Panc1 (cell line): ENCODE measurements at regions of chr2 and their contacts with region 1.

Region 1: DNA sequence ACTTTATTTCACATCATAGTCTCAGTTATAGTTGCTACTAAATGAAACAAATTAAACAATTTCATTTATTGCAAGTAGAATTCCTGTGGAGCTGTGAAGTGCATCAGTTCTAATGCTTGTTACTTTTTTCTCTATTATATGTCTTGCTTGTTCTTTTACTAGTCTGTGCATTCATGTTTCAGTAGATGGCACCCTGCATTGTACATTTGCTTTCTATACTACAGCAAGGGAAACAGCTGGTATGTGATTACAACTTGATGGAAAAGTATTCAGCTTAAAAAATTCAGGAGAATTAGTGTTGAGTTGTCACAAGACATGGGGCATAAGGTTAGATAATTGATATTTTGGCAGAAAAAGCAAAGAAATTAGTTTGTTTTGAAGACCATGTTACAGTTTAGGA is 72.3 kb downstream of the TANK start:
- DNase-seq: no peak
- ATAC-seq: no peak
- H3K4me3 ChIP-seq: no peak overlapping the region
- H3K27ac ChIP-seq: no peak overlapping the region
- H3K4me1 ChIP-seq: peaks cover 7% of the 10 kb centered on the region
- H3K27me3 ChIP-seq: no peaks in the 10 kb centered on the region
- CTCF ChIP-seq: peak; percentile 15; the same call in 1 of the 2 replicates

Region 2: DNA sequence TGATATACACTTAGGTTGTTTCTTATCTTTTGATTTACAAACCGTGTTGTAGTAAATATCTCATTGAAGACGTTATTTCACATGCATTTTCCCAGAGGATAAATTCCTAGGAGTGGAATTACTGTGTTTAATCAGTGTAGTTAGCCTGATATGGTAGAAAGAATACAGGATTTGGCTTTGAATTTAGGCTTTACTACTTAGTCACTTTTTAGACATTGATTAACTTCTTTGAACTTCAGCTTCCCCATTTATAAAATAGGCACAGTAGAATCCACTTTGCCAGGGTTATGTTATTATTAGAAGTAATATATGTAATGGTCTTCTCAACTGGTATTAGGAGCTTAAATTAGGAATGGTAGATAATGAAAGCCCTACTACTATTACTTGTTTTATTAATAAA is 103.1 kb after region 1 on chr2:
- CTCF ChIA-PET with region 1: no interaction called
- POLR2A ChIA-PET with region 1: interaction called, 12 read pairs
- in situ Hi-C with region 1: no loop called
- intact Hi-C with region 1: no loop called
- DNase-seq: no peak
- ATAC-seq: no peak
- H3K4me3 ChIP-seq: no peak overlapping the region
- H3K27ac ChIP-seq: no peak overlapping the region
- H3K4me1 ChIP-seq: no peaks in the 10 kb centered on the region
- H3K27me3 ChIP-seq: no peaks in the 10 kb centered on the region
- CTCF ChIP-seq: no peak